Activated CD4-positive, alpha-beta memory T cell treated with anti-CD3 and anti-CD28 coated beads for 36 hours (primary cell): ENCODE measurements at regions of chr1 and their contacts with region 1.

Region 1: GRCh38 chr1:160618763-160619274 is 28.0 kb downstream of the SLAMF1 start:
- DNase-seq: peak; percentile 59
- H3K4me3 Mint-ChIP-seq: no peak overlapping the region
- H3K27ac Mint-ChIP-seq: peak overlapping the region; percentile 68
- H3K4me1 Mint-ChIP-seq: peaks cover 63% of the 10 kb centered on the region
- H3K27me3 Mint-ChIP-seq: no peaks in the 10 kb centered on the region

Region 2: DNA sequence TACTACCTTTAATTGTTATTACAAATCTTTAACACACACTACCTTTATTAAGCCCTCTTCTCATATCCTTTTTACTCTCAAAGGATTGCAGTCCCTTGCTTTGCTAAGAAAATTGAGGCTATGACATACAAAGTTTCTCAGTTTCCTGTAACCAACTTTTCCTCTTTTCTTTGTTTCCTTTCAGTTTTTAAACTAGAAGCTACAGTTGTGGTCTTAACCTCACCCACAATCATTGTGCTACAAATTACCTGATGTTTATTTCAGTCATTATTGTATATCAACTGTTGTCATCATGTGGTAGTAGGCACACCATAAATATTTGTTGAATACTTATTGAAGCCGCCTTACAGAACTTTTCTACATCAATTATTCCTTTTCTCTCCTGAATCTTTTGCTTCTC is 147.6 kb before region 1 on chr1:
- CTCF ChIA-PET with region 1: no interaction called
- POLR2A ChIA-PET with region 1: no interaction called
- intact Hi-C with region 1: no loop called
- DNase-seq: no peak
- H3K4me3 Mint-ChIP-seq: no peak overlapping the region
- H3K27ac Mint-ChIP-seq: no peak overlapping the region
- H3K4me1 Mint-ChIP-seq: peaks cover 24% of the 10 kb centered on the region
- H3K27me3 Mint-ChIP-seq: no peaks in the 10 kb centered on the region

Region 3: GRCh38 chr1:160664573-160665051 is 45.8 kb after region 1 on chr1:
- CTCF ChIA-PET with region 1: interaction called, 15 read pairs
- POLR2A ChIA-PET with region 1: interaction called, 3 read pairs
- intact Hi-C with region 1: no loop called
- DNase-seq: peak; percentile 70
- H3K4me3 Mint-ChIP-seq: peak overlapping the region; percentile 40
- H3K27ac Mint-ChIP-seq: peak overlapping the region; percentile 94
- H3K4me1 Mint-ChIP-seq: peaks cover 80% of the 10 kb centered on the region
- H3K27me3 Mint-ChIP-seq: no peaks in the 10 kb centered on the region